Pancreas (tissue), 10 donors: ENCODE measurements at regions of chr5 and their contacts with region 1.

Region 1: DNA sequence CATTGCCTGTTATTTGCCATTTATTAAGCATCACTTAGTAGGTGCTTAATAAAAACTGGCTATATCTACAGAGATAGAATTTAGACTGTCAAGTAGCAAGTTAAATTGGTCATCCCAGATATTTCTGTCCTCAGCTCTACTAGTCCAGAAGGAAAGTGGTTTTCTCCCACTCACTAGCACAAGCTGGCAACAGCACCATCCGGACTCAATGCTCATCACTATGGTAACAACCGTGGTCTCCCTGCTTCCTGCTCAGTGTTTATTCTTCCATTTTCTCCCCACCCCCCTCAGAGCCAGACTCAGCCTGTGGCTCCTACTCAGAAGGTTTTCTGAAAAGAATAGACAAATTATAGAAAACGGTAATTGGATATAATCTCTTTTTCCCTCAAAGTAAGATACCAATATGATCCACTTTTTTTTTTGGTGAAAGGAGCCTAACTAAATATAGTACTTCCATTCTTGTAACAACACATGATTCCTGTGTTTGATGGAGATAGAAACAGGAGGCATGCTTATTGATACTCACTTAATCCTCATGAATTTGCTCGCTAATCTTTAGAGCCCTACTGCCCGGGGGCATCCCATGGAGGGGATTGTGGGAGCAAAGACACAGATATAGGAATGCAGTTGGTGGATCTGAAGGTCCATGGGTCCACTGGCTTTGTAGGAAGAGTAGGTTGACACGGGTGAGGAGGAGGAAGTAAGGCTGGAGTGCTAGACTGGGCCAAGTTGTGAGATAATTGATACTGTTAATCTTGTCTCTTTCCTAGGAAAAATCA is 191.4 kb downstream of the MAN2A1 start:
- DNase-seq: no peak
- ATAC-seq: peak in 2 of 4 donors; percentile 78 to 87
- H3K4me3 ChIP-seq: no peak overlapping the region
- H3K27ac ChIP-seq: no peak overlapping the region
- H3K4me1 ChIP-seq: no peaks in the 10 kb centered on the region
- H3K27me3 ChIP-seq: no peaks in the 10 kb centered on the region
- CTCF ChIP-seq: no peak

Region 2: GRCh38 chr5:109676920-109677319 is 204.2 kb before region 1 on chr5:
- intact Hi-C with region 1: no loop called
- DNase-seq: no peak
- ATAC-seq: no peak
- H3K4me3 ChIP-seq: no peak overlapping the region
- H3K27ac ChIP-seq: no peak overlapping the region
- H3K4me1 ChIP-seq: no peaks in the 10 kb centered on the region
- H3K27me3 ChIP-seq: no peaks in the 10 kb centered on the region
- CTCF ChIP-seq: no peak

Region 3: GRCh38 chr5:109836270-109836669 is 44.8 kb before region 1 on chr5:
- intact Hi-C with region 1: no loop called
- DNase-seq: no peak
- ATAC-seq: peak in 1 of 4 donors; percentile 25
- H3K4me3 ChIP-seq: no peak overlapping the region
- H3K27ac ChIP-seq: no peak overlapping the region
- H3K4me1 ChIP-seq: no peaks in the 10 kb centered on the region
- H3K27me3 ChIP-seq: no peaks in the 10 kb centered on the region
- CTCF ChIP-seq: no peak

Region 4: DNA sequence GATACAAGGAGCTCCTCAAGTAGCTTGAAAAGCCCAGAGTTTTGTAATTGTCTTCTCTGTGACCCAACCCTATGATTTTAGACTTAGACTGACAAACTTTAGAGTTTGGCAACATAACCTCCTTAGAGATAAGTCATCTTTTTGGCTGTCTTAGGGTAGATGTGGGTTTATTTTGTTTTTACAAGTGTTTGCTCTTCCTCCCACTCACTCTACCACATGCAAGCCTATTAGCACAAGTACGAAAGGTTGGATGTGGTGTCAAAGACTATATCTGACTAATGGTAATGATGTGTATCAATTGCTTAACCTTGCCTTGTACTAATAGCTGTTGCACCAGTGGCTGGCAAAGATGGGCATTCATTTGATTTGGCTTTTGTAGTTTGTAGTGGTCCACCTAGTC is 904.2 kb after region 1 on chr5:
- intact Hi-C with region 1: loop called in 1 of 3 experiments (anchors 10 kb)
- DNase-seq: no peak
- ATAC-seq: no peak
- H3K4me3 ChIP-seq: no peak overlapping the region
- H3K27ac ChIP-seq: no peak overlapping the region
- H3K4me1 ChIP-seq: no peaks in the 10 kb centered on the region
- H3K27me3 ChIP-seq: no peaks in the 10 kb centered on the region
- CTCF ChIP-seq: no peak